ENCODE measurements at regions of chr7 and their contacts with region 1.

Region 1: DNA sequence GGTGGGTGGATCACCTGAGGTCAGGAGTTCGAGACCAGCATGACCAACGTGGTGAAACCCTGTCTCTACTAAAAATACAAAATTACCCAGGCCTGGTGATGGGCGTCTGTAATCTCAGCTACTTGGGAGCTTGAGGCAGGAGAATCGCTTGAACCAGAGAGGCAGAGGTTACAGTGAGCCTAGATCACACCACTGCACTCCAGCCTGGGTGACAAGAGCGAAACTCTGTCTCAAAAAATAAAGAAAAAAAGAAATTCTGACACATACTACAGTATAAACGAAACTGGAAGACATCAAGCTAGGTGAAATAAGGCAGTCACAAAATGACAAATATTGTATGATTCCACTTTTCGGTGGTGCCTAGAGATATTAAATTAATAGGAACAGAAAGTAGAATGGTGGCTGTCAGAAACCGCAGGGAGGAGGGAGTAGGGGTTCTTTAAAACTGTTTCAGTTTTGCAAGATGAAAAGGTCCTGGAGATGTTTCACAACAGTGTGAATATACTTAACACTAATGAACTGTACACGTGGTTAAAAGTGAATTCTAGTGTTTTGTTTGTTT is 23.2 kb downstream of the PILRA start:
- DNase-seq: peak; percentile 78
- H3K4me3 Mint-ChIP-seq: no peak overlapping the region
- H3K27ac Mint-ChIP-seq: no peak overlapping the region
- H3K4me1 Mint-ChIP-seq: peaks cover 26% of the 10 kb centered on the region
- H3K27me3 Mint-ChIP-seq: peaks cover 24% of the 10 kb centered on the region

Region 2: DNA sequence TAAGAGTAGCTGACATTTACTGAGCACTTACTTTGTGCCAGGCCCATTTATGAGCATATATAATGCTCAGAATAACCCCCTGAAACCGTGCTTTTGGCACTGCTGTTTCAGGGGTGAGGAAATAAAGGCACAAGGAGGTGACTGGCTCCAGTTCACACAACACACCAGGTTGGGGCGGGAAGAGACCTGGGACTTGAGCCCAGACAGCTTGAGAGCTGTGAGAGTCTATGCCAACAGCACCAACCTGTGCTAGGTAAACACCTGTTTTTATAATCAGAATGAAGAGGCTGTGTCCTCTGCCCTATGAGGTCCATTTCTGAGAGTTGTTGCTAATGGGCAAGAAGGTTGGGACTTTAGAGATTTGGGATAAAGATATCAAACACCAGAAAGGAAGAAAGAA is 411.9 kb before region 1 on chr7:
- CTCF ChIA-PET with region 1: no interaction called
- POLR2A ChIA-PET with region 1: no interaction called
- intact Hi-C with region 1: no loop called
- DNase-seq: no peak
- H3K4me3 Mint-ChIP-seq: no peak overlapping the region
- H3K27ac Mint-ChIP-seq: no peak overlapping the region
- H3K4me1 Mint-ChIP-seq: no peaks in the 10 kb centered on the region
- H3K27me3 Mint-ChIP-seq: no peaks in the 10 kb centered on the region

Region 3: GRCh38 chr7:100342765-100343164 is 53.7 kb before region 1 on chr7:
- CTCF ChIA-PET with region 1: interaction called, 3 read pairs
- POLR2A ChIA-PET with region 1: no interaction called
- intact Hi-C with region 1: loop called (anchors 2 kb)
- DNase-seq: no peak
- H3K4me3 Mint-ChIP-seq: no peak overlapping the region
- H3K27ac Mint-ChIP-seq: peak overlapping the region; percentile 64
- H3K4me1 Mint-ChIP-seq: peaks cover 41% of the 10 kb centered on the region
- H3K27me3 Mint-ChIP-seq: no peaks in the 10 kb centered on the region

Region 4: GRCh38 chr7:100369105-100369504 is 27.4 kb before region 1 on chr7:
- CTCF ChIA-PET with region 1: interaction called, 4 read pairs
- POLR2A ChIA-PET with region 1: interaction called, 12 read pairs
- intact Hi-C with region 1: loop called (anchors 1 kb)
- DNase-seq: no peak
- H3K4me3 Mint-ChIP-seq: no peak overlapping the region
- H3K27ac Mint-ChIP-seq: no peak overlapping the region
- H3K4me1 Mint-ChIP-seq: peaks cover 37% of the 10 kb centered on the region
- H3K27me3 Mint-ChIP-seq: no peaks in the 10 kb centered on the region

Region 5: DNA sequence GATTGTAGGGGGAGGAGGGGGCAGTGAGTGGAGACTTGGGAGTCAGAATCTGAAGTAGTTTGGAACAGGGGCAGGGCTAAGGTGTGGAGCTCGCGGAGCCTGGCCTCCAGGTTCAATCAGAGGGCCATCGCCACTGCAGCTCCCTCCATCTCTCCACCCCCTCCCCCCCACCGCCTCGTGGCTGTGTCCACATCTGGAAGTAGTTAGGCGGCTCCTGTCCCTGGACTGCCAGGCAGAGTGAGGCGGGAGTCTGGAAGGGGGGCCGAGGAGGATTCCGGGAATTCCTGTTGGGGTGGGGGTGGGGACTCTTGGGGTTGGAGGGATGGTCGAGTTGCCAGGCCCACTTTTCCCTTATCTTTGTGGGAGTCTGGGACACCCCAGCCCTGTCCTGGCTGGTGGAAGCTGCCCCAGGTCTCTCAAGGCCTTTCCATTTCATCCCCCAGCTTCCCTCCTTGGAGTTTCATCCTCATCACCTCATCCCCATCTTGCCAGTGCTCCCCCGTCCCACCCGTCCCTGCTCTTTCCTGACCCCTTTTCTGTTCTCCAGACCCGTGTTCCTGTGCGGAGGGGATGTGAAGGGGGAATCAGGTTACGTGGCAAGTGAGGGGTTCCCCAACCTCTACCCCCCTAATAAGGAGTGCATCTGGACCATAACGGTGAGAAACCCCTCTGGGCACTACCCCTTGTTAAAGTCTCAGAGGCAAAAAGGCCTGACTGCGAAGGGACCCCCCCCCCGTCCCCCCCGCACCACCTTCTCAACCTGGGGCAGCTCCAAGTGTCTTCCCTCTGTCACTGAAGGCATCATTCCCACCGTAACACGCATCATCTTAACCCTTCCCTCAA is 206.6 kb after region 1 on chr7:
- CTCF ChIA-PET with region 1: no interaction called
- POLR2A ChIA-PET with region 1: no interaction called
- intact Hi-C with region 1: no loop called
- DNase-seq: no peak
- H3K4me3 Mint-ChIP-seq: peak overlapping the region; percentile 80
- H3K27ac Mint-ChIP-seq: no peak overlapping the region
- H3K4me1 Mint-ChIP-seq: peaks cover 18% of the 10 kb centered on the region
- H3K27me3 Mint-ChIP-seq: no peaks in the 10 kb centered on the region

Measured in activated CD4-positive, alpha-beta memory T cell treated with anti-CD3 and anti-CD28 coated beads for 36 hours (primary cell).